ENCODE measurements at regions of chr20 and their contacts with region 1.

Region 1: DNA sequence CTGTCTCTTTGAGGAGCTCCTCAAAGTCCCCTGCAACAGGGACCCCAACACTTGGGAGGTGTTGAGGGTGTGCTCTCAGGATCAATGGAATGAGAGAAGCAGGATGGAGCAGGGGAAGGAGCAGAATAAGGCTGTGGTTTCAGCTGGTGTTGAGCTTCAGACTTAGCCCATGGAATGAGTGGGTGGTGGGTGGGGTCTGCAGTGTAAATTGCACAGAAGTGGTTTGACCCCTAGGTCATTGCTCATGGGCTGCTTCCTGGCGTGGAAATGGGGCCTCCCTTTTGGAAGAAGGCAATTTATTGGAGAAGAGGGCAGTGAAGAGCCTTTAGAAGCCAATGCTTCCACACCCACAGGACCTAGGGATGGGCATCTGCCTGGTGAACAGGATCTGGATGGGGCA is 37.0 kb upstream of the KCNG1 start:
- DNase-seq: no peak
- H3K4me3 Mint-ChIP-seq: no peak overlapping the region
- H3K27ac Mint-ChIP-seq: no peak overlapping the region
- H3K4me1 Mint-ChIP-seq: peaks cover 29% of the 10 kb centered on the region
- H3K27me3 Mint-ChIP-seq: peaks cover 6% of the 10 kb centered on the region

Region 2: DNA sequence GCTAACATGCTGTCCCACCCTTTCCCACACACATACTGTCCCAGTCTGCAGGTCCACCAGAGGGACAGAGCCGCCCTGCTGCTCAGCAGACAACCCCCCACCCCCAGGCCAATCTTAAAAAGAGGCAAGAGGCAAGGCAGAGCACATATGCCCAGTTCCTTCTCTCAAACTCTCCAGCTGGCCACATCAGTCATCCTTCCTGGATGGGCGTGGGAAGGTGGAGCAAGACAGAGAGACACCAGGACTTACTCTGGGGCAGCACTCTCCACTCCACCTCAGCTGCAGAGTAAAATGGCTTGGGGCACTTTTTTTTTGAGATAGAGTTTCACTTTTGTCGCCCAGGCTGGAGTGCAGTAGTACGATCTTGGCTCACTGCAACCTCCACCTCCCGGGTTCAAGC is 90.4 kb before region 1 on chr20:
- intact Hi-C with region 1: no loop called
- DNase-seq: no peak
- H3K4me3 Mint-ChIP-seq: no peak overlapping the region
- H3K27ac Mint-ChIP-seq: no peak overlapping the region
- H3K4me1 Mint-ChIP-seq: no peaks in the 10 kb centered on the region
- H3K27me3 Mint-ChIP-seq: peaks cover 8% of the 10 kb centered on the region

Region 3: GRCh38 chr20:50980851-50981713 is 78.8 kb before region 1 on chr20:
- intact Hi-C with region 1: loop called (anchors 2 kb)
- DNase-seq: peak; percentile 87
- H3K4me3 Mint-ChIP-seq: peak overlapping the region; percentile 40
- H3K27ac Mint-ChIP-seq: peak overlapping the region; percentile 88
- H3K4me1 Mint-ChIP-seq: peaks cover 14% of the 10 kb centered on the region
- H3K27me3 Mint-ChIP-seq: peaks cover 15% of the 10 kb centered on the region

Region 4: DNA sequence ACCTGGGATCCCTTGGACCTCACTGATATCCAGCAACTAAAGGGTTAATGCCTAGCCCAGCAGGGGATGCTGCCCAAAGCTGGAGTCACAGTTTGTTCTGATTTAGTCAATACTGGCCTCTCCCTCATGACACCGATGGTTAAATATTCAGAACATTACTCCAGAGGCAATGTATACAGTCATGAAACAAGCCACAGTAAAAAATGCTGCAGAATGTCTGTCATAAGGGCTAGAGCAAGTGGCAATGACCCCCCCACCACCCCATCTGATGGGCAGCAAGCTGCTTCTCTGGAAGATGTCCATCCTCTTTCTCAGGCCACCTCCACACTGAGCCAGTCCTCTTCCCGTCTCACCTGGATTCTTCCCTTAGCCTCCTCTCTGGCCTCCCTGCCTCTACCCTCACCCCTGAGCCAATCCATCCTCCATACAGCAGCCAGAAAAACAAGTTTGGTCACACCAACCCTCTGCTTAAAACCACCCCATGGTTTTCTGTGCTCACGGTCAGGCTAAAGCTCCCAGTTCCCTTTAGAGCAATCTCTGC is 62.1 kb after region 1 on chr20:
- intact Hi-C with region 1: loop called (anchors 5 kb)
- DNase-seq: no peak
- H3K4me3 Mint-ChIP-seq: no peak overlapping the region
- H3K27ac Mint-ChIP-seq: no peak overlapping the region
- H3K4me1 Mint-ChIP-seq: peaks cover 4% of the 10 kb centered on the region
- H3K27me3 Mint-ChIP-seq: peaks cover 32% of the 10 kb centered on the region

Region 5: DNA sequence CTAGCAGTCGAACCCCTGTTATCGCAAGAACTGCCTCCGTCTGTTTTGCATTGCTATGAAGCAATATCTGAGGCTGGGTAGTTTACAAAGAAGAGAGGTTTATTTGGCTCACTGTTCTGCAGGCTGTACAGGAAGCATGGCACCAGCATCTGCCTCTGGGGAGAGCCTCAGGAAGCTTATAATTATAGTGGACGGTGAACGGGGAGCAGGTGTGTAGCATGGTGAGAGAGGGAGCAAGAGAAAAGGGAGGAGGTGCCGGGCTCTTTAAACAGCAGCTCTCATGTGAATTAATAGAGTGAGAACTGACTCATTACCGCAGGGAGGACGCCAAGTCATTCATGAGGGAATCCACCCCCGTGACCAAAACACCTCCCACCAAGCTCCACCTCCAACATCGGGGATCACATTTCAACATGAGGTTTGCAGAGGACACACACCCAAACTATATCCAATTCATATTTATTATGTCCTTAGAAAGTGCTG is 135.6 kb after region 1 on chr20:
- intact Hi-C with region 1: no loop called
- DNase-seq: no peak
- H3K4me3 Mint-ChIP-seq: no peak overlapping the region
- H3K27ac Mint-ChIP-seq: no peak overlapping the region
- H3K4me1 Mint-ChIP-seq: no peaks in the 10 kb centered on the region
- H3K27me3 Mint-ChIP-seq: peaks cover 3% of the 10 kb centered on the region

Region 6: DNA sequence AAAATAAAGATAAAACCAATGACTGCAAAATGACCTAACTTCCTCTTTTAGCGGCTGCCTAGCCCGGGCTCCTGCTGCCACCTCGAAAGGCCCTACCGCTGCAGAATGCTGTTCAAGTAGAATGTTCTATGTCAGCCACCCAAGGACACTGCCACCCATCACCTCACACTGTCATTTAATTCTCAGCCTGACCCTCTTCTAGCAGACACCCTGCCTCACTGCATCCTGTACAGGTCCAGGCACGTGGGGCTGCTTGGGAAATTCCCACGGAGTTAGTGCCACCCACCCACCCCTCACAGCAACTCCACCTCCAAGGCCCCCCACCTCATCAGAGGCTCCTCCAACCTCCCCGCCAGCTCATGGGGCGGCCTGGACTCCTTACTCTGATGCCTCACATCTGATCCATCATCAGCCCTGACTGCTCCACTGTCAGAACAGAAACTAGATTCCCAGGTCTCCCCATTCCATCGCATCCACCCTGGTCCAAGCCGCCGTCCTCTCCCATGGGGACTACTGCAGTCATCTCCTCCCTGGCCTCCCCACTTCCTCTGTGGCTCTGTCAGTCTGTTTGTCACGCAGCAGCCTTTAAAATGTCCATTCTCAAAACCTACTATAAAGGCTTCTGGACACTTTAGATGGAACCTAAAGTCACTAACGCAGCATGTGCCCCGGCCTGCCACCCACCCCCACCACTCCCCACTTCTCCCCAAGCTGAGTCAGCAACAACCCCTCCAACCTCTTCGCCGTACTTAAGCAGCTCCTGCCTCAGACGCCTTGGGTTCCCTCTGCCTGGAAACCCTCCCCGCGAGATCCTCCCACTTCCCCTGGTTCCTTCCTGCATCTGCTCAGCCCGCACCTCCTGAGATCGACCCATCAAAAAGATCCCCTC is 465.6 kb after region 1 on chr20:
- intact Hi-C with region 1: loop called (anchors 5 kb)
- DNase-seq: peak; percentile 80
- H3K4me3 Mint-ChIP-seq: peak overlapping the region; percentile 82
- H3K27ac Mint-ChIP-seq: peak overlapping the region; percentile 94
- H3K4me1 Mint-ChIP-seq: peaks cover 57% of the 10 kb centered on the region
- H3K27me3 Mint-ChIP-seq: no peaks in the 10 kb centered on the region

Region 7: DNA sequence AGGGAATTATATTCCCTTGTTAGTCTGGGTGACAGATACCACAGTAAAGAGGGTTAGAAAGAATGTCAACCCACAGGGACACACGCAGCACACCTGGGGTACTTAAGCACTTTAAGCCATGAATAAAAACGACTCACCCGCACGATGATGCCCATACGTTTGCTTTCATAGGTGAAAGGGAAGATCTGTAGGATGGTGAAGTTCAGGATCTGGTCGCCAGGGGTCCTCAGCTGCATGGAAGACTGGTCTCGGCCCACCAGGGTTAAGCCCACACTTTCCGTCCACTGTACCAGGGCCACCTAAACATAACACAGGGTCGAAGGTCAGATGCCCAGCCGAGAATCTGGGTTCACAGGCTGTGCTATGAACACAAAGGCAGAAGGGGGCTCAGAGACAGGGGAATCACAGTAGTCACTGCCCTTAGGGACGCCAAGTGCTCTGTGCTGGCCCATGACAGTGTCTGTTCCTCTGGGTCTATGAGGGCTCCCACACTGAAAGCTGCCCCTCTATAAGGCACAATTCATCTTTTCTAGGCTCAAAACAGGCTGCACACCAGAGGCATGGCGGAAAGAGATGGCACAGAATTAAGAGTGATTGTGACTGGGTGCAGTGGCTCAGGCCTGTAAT is 579.5 kb after region 1 on chr20:
- intact Hi-C with region 1: loop called (anchors 10 kb)
- DNase-seq: peak; percentile 82
- H3K4me3 Mint-ChIP-seq: no peak overlapping the region
- H3K27ac Mint-ChIP-seq: no peak overlapping the region
- H3K4me1 Mint-ChIP-seq: peaks cover 3% of the 10 kb centered on the region
- H3K27me3 Mint-ChIP-seq: peaks cover 2% of the 10 kb centered on the region

Region 8: GRCh38 chr20:52047811-52048764 is 988.2 kb after region 1 on chr20:
- intact Hi-C with region 1: loop called (anchors 5 kb)
- DNase-seq: peak; percentile 81
- H3K4me3 Mint-ChIP-seq: peak overlapping the region; percentile 63
- H3K27ac Mint-ChIP-seq: peak overlapping the region; percentile 85
- H3K4me1 Mint-ChIP-seq: peaks cover 30% of the 10 kb centered on the region
- H3K27me3 Mint-ChIP-seq: peaks cover 4% of the 10 kb centered on the region